Endothelial cell of umbilical vein (primary cell): ENCODE measurements at regions of chr1 and their contacts with region 1.

Region 1: GRCh38 chr1:232950197-232951176 is at the start of gene NTPCR:
- DNase-seq: peak; percentile 96
- H3K4me3 ChIP-seq: peak within 1 kb of the TSS; percentile 48 to 85 (median 64)
- H3K27ac ChIP-seq: peak within 1 kb of the TSS; percentile 69
- H3K4me1 ChIP-seq: peaks cover 10% of the 10 kb centered on the region
- H3K27me3 ChIP-seq: no peaks in the 10 kb centered on the region
- CTCF ChIP-seq: peak in 1 of 2 donors; percentile 14
- POLR2A ChIP-seq: peak; percentile 85
- total RNA-seq, gene NTPCR: 30.3 and 35.3 TPM in 2 replicates

Region 2: GRCh38 chr1:232684363-232685105 is 266.0 kb before region 1 on chr1:
- CTCF ChIA-PET with region 1: interaction called, 3 read pairs
- POLR2A ChIA-PET with region 1: no interaction called
- dilution Hi-C with region 1: no loop called
- intact Hi-C with region 1: loop called (anchors 5 kb)
- DNase-seq: peak; percentile 74
- H3K4me3 ChIP-seq: no peak overlapping the region
- H3K27ac ChIP-seq: peak overlapping the region; percentile 62
- H3K4me1 ChIP-seq: peaks cover 40% of the 10 kb centered on the region
- H3K27me3 ChIP-seq: no peaks in the 10 kb centered on the region
- CTCF ChIP-seq: no peak
- POLR2A ChIP-seq: peak; percentile 57

Region 3: GRCh38 chr1:232962771-232963745 is 12.6 kb after region 1 on chr1:
- CTCF ChIA-PET with region 1: interaction called, 23 read pairs
- POLR2A ChIA-PET with region 1: no interaction called
- dilution Hi-C with region 1: no loop called
- intact Hi-C with region 1: no loop called
- DNase-seq: peak; percentile 93
- H3K4me3 ChIP-seq: peak overlapping the region in 1 of 3 experiments; percentile 3
- H3K27ac ChIP-seq: peak overlapping the region; percentile 59
- H3K4me1 ChIP-seq: peaks cover 23% of the 10 kb centered on the region
- H3K27me3 ChIP-seq: no peaks in the 10 kb centered on the region
- CTCF ChIP-seq: no peak
- POLR2A ChIP-seq: no peak

Region 4: DNA sequence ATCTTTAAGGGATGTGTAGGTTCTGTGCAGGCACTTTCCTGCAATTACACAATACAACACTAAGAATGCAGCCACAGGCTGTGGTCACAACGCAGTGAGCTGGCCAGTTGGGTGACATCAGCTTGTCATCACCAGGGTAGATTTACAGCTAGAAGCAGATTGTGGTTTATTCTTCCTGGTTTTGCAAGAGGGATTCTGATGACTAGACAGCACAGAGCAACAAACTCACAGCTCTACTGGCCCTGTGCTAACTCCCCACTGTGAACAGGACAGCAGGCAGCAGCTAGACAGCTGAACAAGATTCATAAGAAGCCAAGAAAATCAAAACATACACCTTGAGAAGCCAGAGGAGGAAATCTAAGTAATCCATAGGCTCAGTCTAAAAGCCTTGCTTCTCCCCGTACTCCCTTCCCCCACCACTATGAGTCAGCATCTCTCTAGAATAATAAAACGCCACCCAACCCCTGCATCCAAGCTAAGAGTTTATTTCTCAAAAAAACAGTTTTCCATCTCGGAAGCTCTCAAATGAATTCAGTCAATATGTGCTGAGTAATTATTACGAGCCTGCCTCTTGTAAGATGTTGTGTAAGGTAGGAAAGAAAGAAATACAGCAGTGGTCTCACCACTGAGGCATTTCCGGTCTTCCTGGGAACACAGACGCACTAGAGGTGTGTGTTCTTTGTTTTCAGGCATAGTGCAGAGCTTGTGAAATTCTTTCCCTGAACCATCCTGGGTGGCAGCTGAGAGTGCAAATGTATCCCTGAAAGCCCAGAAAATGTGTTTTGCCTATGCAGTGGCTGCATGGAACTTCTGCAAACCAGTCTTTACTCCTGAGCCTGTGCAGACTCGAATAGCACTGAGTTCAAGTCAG is 162.8 kb after region 1 on chr1:
- CTCF ChIA-PET with region 1: interaction called, 3 read pairs
- POLR2A ChIA-PET with region 1: no interaction called
- dilution Hi-C with region 1: no loop called
- intact Hi-C with region 1: loop called (anchors 1 kb)
- DNase-seq: peak; percentile 89
- H3K4me3 ChIP-seq: peak overlapping the region in 1 of 3 experiments; percentile 6
- H3K27ac ChIP-seq: peak overlapping the region; percentile 89
- H3K4me1 ChIP-seq: peaks cover 32% of the 10 kb centered on the region
- H3K27me3 ChIP-seq: no peaks in the 10 kb centered on the region
- CTCF ChIP-seq: no peak
- POLR2A ChIP-seq: no peak

Region 5: DNA sequence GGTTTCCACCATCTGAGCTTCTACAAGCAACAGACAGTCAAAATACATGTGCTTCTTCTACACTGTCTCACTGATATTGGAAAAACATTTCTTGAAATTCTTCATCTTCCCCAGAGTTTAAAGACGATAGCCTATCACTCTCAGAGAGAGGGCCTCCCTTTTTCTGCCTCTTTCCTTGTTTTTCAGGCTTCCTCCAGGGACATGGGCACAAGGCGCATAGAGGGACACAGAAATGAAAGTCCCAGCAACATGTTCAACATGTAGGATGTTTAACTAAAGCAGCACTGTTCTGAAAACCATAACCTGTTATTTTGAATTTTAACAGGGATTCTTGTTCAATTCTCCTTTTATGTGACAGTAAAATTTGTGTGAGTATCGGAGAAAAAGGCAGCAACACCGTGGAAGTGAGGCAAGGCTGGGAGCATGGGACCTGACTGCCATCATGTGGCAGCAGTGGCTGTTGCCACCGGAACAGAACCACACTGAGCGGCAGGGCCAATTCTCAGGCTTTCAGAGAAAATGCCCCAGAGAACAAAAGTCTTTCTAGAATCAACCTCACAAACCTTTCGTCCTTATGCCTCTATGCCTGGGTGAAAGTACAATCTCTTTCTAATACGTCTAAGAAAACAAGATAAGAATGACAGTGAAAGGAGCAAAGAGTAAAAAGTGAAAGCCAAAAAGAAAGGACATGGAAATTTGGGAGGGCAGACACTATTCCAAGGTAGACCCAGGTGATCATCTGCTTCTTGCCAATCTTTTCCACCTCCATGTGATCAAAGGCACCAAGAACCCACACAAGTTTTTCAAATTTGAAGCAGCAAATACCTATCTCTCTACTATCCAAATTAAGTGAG is 290.6 kb after region 1 on chr1:
- CTCF ChIA-PET with region 1: no interaction called
- POLR2A ChIA-PET with region 1: no interaction called
- dilution Hi-C with region 1: no loop called
- intact Hi-C with region 1: loop called (anchors 2 kb)
- DNase-seq: peak; percentile 65
- H3K4me3 ChIP-seq: no peak overlapping the region
- H3K27ac ChIP-seq: no peak overlapping the region
- H3K4me1 ChIP-seq: no peaks in the 10 kb centered on the region
- H3K27me3 ChIP-seq: no peaks in the 10 kb centered on the region
- CTCF ChIP-seq: peak; percentile 76 to 81
- POLR2A ChIP-seq: no peak